Caco-2 (cell line): ENCODE measurements at regions of chr7 and their contacts with region 1.

Region 1: GRCh38 chr7:36663481-36663880 is 60.8 kb downstream of the AOAH start:
- DNase-seq: no peak
- H3K4me3 ChIP-seq: no peak overlapping the region
- H3K4me3 Mint-ChIP-seq: no peak overlapping the region
- H3K27ac Mint-ChIP-seq: no peak overlapping the region
- H3K4me1 ChIP-seq: no peaks in the 10 kb centered on the region
- H3K4me1 Mint-ChIP-seq: peaks cover 7% of the 10 kb centered on the region
- H3K27me3 ChIP-seq: no peaks in the 10 kb centered on the region
- H3K27me3 Mint-ChIP-seq: no peaks in the 10 kb centered on the region
- CTCF ChIP-seq: no peak

Region 2: DNA sequence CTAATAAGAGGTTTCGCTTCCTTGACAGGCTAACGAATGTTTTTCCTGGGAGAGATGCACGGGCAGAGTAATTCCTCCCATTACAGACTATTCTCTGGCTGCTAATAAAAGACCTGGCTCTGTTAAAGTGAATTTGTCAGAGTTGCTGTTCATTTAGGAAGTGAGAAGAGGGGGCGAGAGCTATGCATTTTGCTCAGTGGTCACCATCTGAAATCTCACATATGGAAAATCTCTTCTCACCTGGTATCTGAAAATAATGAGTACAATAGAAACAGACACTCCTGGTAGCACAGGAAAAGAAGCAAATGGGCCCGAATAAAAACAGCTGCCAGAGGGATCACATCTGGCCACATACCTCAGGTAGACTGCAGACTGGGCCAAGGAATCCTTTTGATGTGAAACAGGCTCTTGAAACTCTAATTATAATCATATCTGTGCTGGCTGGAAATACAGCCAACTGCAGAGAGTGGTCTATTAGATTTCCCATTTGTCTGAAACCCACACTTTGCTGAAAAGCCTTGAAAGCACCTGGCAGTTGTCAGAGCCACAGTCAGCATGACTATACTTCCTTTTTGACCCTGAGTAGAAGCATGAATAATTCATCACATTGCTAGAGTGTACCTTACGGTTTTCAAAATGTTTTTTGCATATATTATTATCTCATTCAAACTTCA is 27.2 kb after region 1 on chr7:
- CTCF ChIA-PET with region 1: no interaction called
- POLR2A ChIA-PET with region 1: no interaction called
- intact Hi-C with region 1: loop called (anchors 1 kb)
- DNase-seq: no peak
- H3K4me3 ChIP-seq: no peak overlapping the region
- H3K4me3 Mint-ChIP-seq: no peak overlapping the region
- H3K27ac Mint-ChIP-seq: no peak overlapping the region
- H3K4me1 ChIP-seq: no peaks in the 10 kb centered on the region
- H3K4me1 Mint-ChIP-seq: no peaks in the 10 kb centered on the region
- H3K27me3 ChIP-seq: no peaks in the 10 kb centered on the region
- H3K27me3 Mint-ChIP-seq: no peaks in the 10 kb centered on the region
- CTCF ChIP-seq: no peak